ENCODE measurements at regions of chr12 and their contacts with region 1.

Region 1: DNA sequence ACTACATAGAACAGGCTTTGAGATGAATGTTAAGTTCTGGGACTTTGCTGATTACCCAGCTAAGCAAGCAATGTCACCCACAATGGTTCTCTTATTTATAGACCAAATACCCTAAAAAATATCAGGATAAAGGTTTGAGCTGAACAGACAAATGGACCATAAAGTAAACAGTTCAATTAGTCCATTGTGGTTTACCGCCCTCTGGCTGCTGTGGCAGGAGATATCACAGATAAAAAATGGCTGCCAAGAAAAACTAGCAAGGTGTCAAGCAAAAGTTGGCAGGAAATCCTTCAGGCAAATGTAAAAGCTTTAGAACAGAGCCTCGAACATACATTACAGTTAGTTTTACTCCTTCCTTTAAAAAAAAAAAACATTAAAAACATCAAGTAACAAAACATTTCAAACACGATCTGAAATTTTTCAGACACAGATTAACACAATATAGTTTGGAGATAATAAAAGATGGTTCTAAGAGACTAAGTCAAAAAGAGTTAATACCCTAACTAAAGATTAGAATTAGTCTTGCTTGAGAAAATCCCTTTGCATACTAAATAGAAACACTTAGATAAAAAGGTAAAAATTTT is 41.3 kb downstream of the MED13L start:
- DNase-seq: peak; percentile 71
- ATAC-seq: peak; percentile 77
- H3K4me3 Mint-ChIP-seq: peak overlapping the region; percentile 31
- H3K27ac Mint-ChIP-seq: peak overlapping the region; percentile 62
- H3K4me1 Mint-ChIP-seq: peaks cover 22% of the 10 kb centered on the region
- H3K27me3 Mint-ChIP-seq: no peaks in the 10 kb centered on the region

Region 2: GRCh38 chr12:115810122-115810901 is 425.9 kb before region 1 on chr12:
- CTCF ChIA-PET with region 1: no interaction called
- POLR2A ChIA-PET with region 1: no interaction called
- DNase-seq: no peak
- ATAC-seq: no peak
- H3K4me3 Mint-ChIP-seq: no peak overlapping the region
- H3K27ac Mint-ChIP-seq: no peak overlapping the region
- H3K4me1 Mint-ChIP-seq: no peaks in the 10 kb centered on the region
- H3K27me3 Mint-ChIP-seq: no peaks in the 10 kb centered on the region

Region 3: GRCh38 chr12:116066381-116067230 is 169.6 kb before region 1 on chr12:
- CTCF ChIA-PET with region 1: interaction called, 11 read pairs
- POLR2A ChIA-PET with region 1: no interaction called
- DNase-seq: peak; percentile 73
- ATAC-seq: peak; percentile 69
- H3K4me3 Mint-ChIP-seq: no peak overlapping the region
- H3K27ac Mint-ChIP-seq: no peak overlapping the region
- H3K4me1 Mint-ChIP-seq: peaks cover 14% of the 10 kb centered on the region
- H3K27me3 Mint-ChIP-seq: no peaks in the 10 kb centered on the region

Region 4: GRCh38 chr12:116142936-116143898 is 93.0 kb before region 1 on chr12:
- CTCF ChIA-PET with region 1: interaction called, 22 read pairs
- POLR2A ChIA-PET with region 1: no interaction called
- DNase-seq: no peak
- ATAC-seq: peak; percentile 75
- H3K4me3 Mint-ChIP-seq: no peak overlapping the region
- H3K27ac Mint-ChIP-seq: peak overlapping the region; percentile 58
- H3K4me1 Mint-ChIP-seq: peaks cover 45% of the 10 kb centered on the region
- H3K27me3 Mint-ChIP-seq: no peaks in the 10 kb centered on the region

Region 5: DNA sequence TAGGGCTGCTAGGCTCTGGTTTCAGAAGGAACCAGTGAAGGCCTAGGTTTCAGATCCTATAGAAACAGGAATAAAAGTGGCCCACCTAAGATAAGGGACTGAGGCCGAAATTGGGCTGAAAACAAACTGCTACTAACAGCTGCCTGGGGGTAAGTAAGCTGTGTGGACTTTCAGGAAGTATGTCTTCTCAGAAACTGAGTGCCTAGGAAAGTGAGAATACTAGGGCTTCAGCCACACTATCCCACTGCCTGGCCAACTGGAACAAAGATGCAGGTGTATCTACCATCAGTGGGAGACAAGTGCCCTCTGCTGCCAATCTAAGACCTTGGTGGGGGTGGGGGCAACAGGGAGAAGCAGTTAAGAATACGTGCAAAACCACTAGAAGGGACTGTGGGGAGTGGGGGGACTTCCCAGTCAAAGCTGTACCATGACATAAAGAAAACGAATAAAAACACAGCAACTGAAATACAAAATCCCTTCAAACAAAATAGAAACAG is 41.3 kb before region 1 on chr12:
- CTCF ChIA-PET with region 1: interaction called, 12 read pairs
- POLR2A ChIA-PET with region 1: no interaction called
- DNase-seq: peak; percentile 54
- ATAC-seq: peak; percentile 85
- H3K4me3 Mint-ChIP-seq: no peak overlapping the region
- H3K27ac Mint-ChIP-seq: peak overlapping the region; percentile 39
- H3K4me1 Mint-ChIP-seq: peaks cover 22% of the 10 kb centered on the region
- H3K27me3 Mint-ChIP-seq: no peaks in the 10 kb centered on the region

Region 6: GRCh38 chr12:116226026-116226425 is 10.2 kb before region 1 on chr12:
- CTCF ChIA-PET with region 1: interaction called, 17 read pairs
- POLR2A ChIA-PET with region 1: no interaction called
- DNase-seq: no peak
- ATAC-seq: no peak
- H3K4me3 Mint-ChIP-seq: no peak overlapping the region
- H3K27ac Mint-ChIP-seq: no peak overlapping the region
- H3K4me1 Mint-ChIP-seq: peaks cover 2% of the 10 kb centered on the region
- H3K27me3 Mint-ChIP-seq: no peaks in the 10 kb centered on the region

Region 7: DNA sequence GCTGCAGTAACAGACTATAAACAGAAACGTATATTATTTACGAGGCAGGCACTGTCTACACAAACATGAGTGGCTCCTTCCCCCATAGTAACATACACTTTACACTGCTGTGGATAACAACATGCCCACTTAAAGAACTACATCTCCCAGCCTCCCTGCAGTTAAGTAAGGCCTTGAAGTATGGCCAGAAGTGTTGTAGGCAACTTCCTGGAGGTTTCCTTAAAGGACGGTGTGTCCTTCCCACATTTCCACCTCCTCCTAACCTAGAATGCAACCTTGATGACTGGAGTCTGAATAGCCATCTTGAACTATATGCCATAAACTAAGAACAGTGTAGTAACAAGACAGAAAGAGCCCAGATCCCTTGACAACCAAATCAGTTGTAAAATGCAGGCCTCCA is 21.0 kb after region 1 on chr12:
- CTCF ChIA-PET with region 1: interaction called, 11 read pairs
- POLR2A ChIA-PET with region 1: no interaction called
- DNase-seq: no peak
- ATAC-seq: no peak
- H3K4me3 Mint-ChIP-seq: no peak overlapping the region
- H3K27ac Mint-ChIP-seq: no peak overlapping the region
- H3K4me1 Mint-ChIP-seq: peaks cover 17% of the 10 kb centered on the region
- H3K27me3 Mint-ChIP-seq: no peaks in the 10 kb centered on the region

Region 8: GRCh38 chr12:116299064-116299463 is 62.8 kb after region 1 on chr12:
- CTCF ChIA-PET with region 1: no interaction called
- POLR2A ChIA-PET with region 1: no interaction called
- DNase-seq: no peak
- ATAC-seq: no peak
- H3K4me3 Mint-ChIP-seq: no peak overlapping the region
- H3K27ac Mint-ChIP-seq: no peak overlapping the region
- H3K4me1 Mint-ChIP-seq: no peaks in the 10 kb centered on the region
- H3K27me3 Mint-ChIP-seq: peaks cover 19% of the 10 kb centered on the region

Region 9: GRCh38 chr12:117486840-117487659 is 1250.8 kb after region 1 on chr12:
- CTCF ChIA-PET with region 1: no interaction called
- POLR2A ChIA-PET with region 1: no interaction called
- DNase-seq: no peak
- ATAC-seq: no peak
- H3K4me3 Mint-ChIP-seq: no peak overlapping the region
- H3K27ac Mint-ChIP-seq: no peak overlapping the region
- H3K4me1 Mint-ChIP-seq: no peaks in the 10 kb centered on the region
- H3K27me3 Mint-ChIP-seq: no peaks in the 10 kb centered on the region